Transverse colon (tissue), 4 donors: ENCODE measurements at regions of chr2 and their contacts with region 1.

Region 1: GRCh38 chr2:641873-642815 is 35.1 kb downstream of the TMEM18 start:
- DNase-seq: no peak
- H3K4me3 ChIP-seq: no peak overlapping the region
- H3K27ac ChIP-seq: no peak overlapping the region
- H3K4me1 ChIP-seq: no peaks in the 10 kb centered on the region
- H3K27me3 ChIP-seq: peaks cover 7% of the 10 kb centered on the region
- CTCF ChIP-seq: no peak
- EP300 ChIP-seq: no peak
- POLR2A ChIP-seq: no peak

Region 2: DNA sequence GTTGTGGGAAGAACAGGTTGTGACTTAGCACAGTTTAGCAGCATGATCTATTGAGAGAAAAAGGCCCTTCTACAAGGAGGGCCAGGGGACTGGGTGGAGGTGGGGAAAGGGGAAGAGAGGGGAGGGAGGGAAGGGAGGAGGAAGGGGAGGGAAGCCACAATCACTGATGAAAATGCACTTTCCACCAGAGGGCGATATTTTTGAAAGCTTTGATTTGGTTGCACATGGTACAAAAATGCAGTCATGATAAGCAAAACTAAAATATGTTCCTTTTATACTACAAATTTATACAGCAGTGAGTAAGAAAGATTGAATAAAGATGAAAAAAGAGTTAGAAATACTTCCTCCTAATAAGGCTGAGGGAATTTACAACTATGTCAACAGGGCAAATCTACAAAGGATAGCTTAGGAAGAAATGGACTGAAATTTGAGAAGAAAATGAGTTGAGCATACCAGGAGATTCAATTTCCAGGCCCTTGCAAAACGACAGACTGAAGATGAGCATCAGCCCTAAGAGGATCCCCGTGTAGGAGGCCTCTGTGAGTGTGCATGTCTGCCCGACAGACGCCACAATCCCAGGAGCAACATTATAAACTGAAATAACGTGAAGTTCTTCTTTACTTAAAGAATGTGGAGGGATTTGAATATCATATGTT is 395.5 kb before region 1 on chr2:
- in situ Hi-C with region 1: loop called in 1 of 4 experiments (anchors 10 kb)
- intact Hi-C with region 1: loop called (anchors 5 kb)
- DNase-seq: no peak
- H3K4me3 ChIP-seq: no peak overlapping the region
- H3K27ac ChIP-seq: no peak overlapping the region
- H3K4me1 ChIP-seq: no peaks in the 10 kb centered on the region
- H3K27me3 ChIP-seq: no peaks in the 10 kb centered on the region
- CTCF ChIP-seq: peak; percentile 35 to 61 (median 53)
- EP300 ChIP-seq: no peak
- POLR2A ChIP-seq: no peak